Posterior vena cava (tissue), 2 donors: ENCODE measurements at regions of chr20 and their contacts with region 1.

Region 1: DNA sequence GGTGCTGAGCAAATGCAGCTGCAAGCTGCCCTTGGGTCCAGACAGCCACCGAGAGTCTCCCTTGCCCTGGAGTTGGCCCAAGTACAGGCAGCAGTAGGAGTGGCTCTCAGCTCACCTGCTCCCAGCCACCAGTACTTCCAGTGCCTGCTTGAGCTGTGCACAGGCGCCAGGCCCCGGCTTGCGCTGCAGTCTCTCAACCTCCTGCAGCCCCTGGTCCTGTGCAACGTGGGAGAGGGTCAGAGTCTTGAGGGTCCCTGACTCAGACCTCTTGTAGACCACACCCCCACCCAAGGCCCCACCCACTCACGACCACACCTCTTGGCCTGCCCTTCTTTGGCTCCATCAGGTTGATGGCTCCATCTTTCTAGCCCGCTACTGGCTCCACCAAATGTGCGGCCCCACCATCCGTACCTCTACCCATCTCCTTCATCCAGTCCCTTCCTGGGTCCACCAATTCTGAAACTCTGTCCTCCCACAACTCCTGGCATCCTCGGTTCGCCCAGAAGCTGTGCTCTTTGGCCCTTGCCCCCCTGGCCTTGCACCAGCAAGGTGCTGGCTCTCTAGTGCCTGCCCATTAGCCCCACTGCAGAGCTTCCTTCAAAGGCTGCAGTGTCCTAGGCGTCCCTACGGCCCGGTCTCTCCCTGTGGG is 16.6 kb upstream of the SPAG4 start:
- DNase-seq: no peak

Region 2: DNA sequence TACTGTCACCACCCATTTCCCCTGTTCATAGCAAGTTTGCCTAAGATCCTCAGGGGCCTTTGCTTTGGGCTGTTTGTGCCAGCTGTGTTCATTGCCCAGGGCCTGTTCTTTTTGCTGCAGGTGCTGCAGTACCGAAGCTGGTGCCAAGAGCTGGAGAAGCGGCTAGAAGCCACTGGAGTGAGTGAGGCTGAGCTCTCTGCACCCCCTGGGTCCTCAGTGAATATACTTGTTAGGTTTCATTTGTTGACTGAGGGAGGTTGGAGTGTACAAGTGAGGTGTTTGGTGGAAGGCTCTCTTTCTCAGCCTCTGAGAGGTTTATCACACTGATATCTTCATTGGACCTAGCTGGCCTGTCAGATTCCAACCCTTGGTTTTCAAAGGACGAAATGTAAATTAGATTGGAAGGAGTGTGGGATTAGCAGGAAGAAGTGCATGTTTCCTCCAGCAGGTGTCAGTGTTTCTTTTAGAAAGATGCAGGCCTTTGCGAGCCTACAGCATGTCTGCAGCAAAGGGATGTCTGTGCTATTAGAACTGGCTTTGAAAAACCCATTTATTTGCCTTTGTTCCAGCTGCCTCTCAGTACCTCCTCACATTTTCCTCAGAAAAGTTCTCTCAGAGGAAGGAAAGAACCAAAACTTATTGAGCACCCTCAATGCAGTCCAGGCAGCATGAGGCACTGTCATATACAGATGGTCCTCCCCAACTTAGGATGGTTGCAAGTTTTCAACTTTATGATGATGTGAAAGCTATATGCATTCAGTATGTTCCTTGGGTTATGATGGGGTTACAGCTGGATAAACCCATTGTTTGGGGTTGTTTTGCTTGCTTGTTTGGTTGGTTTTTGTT is 135.3 kb before region 1 on chr20:
- intact Hi-C with region 1: no loop called
- DNase-seq: no peak

Region 3: DNA sequence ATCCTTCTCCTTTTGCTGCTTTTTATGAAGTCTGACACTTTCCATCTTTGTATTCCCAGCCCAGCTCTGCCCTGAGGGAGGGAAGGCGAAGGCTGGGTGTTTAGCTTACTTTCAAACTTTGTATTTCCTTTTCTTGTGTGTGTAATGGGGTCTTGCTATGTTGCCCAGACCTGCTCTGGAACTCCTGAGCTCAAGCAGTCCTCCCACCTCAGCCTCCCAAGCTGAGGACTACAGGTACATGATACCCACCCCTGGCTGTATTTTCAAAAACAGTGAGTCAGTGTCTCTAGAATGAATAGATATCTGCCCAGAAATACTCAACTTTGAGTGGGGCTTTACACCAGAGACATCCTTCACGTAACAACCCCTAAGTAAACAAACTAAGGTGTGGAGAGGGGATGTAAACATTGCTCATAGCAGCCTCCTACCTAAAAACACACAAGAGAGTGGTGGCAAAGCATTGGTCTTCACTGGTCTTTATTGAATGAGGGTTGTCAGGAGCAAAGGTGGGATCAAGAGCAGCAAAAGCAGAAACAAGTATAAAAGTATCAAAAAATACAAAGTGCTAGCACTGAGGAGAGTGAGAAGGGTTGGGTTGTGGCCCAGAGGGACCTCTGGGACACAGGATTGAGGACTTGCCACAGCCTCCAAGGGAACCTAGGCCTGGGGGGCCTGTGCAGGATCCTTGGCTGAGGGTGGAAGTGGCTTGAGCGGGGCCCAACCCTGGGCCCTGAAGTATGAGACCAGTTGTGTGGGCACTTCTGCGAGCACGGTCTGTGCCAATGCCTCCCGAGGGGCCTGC is 26.8 kb after region 1 on chr20:
- intact Hi-C with region 1: loop called in 1 of 2 experiments (anchors 1 kb)
- DNase-seq: no peak

Region 4: DNA sequence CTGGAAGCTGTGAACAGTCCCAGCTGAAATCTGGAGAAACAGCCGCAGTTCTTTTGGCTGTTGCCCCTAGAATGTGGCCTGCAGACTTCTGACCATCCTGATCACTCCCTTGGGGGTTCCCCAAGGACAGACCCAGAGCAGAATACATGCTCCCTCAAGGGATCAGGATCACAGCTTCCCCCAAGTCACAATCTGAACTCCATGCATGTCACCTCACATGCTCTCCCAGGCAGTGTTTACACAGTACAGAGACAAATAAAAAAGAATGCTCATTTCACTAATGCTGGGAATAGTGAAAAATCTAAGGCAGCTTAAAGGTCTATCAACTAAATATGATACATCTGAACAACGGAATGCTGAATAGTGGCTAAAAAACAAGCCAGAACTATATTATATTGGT is 37.1 kb after region 1 on chr20:
- intact Hi-C with region 1: no loop called
- DNase-seq: no peak